GM10248 (cell line): ENCODE measurements at regions of chrX and their contacts with region 1.

Region 1: DNA sequence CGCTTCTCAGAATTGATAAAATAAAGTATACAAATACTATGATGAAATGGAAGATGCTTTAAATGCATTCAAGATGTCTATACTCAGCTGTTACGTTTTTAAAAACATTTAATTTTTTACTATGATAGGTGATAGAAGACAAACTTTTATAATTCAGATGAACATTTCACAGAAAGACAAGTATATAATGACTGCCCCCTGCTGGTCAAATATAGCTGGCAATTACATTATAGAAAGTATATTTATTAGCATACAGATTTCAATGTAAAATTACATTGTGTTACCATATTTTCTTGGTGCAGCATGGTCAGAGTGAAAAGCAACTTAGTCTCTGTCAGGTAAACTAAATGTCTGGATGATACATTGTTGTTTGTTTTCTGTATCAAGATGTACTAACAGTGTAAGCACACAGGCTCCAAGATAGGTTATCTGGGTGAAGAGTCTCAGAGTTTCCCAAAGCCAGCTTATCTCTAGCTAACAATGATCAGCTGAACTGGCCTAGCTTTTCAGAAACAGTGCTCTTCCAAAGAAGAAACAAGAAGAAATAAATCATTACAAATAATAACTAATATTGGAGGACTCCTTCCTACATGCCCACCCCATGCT is 54.1 kb downstream of the SRPX start:
- DNase-seq: peak; percentile 21
- CTCF ChIP-seq: peak; percentile 5

Region 2: DNA sequence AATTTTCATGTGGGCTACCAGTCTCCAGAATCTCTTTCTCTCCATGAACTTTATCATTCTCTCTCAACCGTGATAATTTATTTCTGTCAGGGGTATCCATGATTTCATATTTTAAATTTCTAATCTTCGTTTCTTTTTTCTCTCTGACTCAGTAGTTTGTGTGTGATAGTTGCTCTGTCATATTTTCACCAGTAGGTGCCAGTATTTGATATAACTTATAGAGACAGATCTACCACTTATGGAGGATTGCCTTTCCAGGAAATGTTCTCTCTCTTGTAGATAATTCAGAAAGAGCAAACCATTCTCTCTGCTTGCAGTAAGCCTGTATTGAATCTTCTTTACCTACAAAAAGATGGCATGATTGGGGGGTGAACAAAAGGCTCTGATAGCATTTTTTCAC is 239.9 kb before region 1 on chrX:
- CTCF ChIA-PET with region 1: interaction called, 16 read pairs
- POLR2A ChIA-PET with region 1: no interaction called
- DNase-seq: no peak
- CTCF ChIP-seq: peak; percentile 27

Region 3: DNA sequence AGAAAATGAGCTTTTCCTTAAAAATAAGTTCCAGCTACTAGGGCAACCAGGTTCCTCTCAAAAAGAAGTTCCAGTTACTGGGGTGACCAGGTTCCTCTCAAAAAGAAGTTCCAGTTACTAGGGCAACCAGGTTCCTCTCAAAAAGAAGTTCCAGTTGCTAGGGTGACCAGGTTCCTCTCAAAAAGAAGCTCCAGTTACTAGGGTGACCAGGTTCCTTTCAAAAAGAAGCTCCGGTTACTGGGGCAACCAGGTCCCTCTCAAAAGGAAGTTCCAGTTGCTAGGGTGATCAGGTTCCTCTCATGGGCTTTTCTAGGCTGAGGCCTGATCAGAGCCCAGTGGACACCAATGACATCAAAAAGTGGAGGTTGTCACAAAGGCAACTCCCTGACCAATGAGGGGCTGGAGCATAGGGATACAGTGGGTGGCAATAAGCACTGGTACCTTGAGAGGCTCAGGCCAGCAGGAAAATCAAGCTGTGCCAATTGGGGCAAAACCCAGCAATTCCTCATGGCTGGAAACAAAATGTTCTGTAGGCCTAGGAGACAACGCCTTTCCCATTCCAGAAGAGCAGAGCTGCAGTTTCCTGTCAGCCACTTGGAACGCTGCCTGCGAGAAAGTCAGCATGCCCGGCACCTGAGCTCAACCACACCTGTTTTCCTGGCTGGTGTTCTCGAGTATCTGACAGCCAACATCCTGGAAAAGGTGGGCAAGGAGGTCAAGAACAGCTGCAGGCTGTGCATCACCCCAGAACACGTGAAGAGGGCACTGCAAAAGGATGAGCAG is 172.6 kb before region 1 on chrX:
- CTCF ChIA-PET with region 1: no interaction called
- POLR2A ChIA-PET with region 1: no interaction called
- DNase-seq: peak; percentile 29
- CTCF ChIP-seq: no peak

Region 4: DNA sequence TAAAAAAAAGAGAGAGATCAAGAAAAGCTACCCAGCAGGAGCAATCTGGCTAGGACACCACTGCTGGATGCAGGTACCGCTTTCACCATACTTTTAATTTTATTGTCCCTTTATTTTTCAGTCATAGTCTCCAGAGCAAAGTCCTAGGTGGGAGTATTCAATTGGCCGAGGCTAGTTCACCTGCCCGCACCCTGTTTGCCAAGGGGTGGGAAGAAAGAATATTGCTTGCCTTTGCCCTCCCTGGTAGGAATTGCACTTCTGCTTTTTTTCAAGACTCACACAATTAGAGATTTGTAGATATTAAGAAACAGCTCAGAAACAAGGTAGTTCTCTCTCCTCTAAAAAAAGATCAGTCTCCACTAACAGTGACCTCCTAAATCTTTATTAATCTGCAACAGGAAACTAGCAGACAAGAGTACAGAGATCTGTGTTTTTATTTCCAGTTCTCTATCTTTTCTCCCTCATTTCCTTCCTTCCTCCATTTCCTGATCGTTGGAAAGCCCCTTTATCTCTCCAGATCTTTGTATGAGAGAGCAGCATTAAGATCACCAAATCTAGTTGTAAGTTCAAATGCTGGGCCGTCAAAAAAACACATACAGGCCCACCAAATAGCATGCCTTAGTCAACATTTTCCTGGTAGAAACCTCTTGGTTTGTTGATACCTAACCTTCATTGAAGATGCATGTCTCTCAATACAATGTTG is 170.1 kb after region 1 on chrX:
- CTCF ChIA-PET with region 1: no interaction called
- POLR2A ChIA-PET with region 1: no interaction called
- DNase-seq: no peak
- CTCF ChIP-seq: no peak